Caco-2 (cell line): ENCODE measurements at regions of chr7 and their contacts with region 1.

Region 1: GRCh38 chr7:92833024-92833765 is 3.2 kb downstream of the CDK6 start:
- DNase-seq: peak; percentile 91 to 94
- H3K4me3 ChIP-seq: peak overlapping the region; percentile 79
- H3K4me3 Mint-ChIP-seq: peak overlapping the region; percentile 86
- H3K27ac Mint-ChIP-seq: peak overlapping the region; percentile 77
- H3K4me1 ChIP-seq: peaks cover 24% of the 10 kb centered on the region
- H3K4me1 Mint-ChIP-seq: peaks cover 18% of the 10 kb centered on the region
- H3K27me3 ChIP-seq: no peaks in the 10 kb centered on the region
- H3K27me3 Mint-ChIP-seq: no peaks in the 10 kb centered on the region
- CTCF ChIP-seq: peak; percentile 91 to 93

Region 2: GRCh38 chr7:92557249-92557648 is 275.9 kb before region 1 on chr7:
- CTCF ChIA-PET with region 1: no interaction called
- POLR2A ChIA-PET with region 1: no interaction called
- intact Hi-C with region 1: no loop called
- DNase-seq: no peak
- H3K4me3 ChIP-seq: no peak overlapping the region
- H3K4me3 Mint-ChIP-seq: no peak overlapping the region
- H3K27ac Mint-ChIP-seq: no peak overlapping the region
- H3K4me1 ChIP-seq: peaks cover 9% of the 10 kb centered on the region
- H3K4me1 Mint-ChIP-seq: no peaks in the 10 kb centered on the region
- H3K27me3 ChIP-seq: no peaks in the 10 kb centered on the region
- H3K27me3 Mint-ChIP-seq: no peaks in the 10 kb centered on the region
- CTCF ChIP-seq: no peak

Region 3: DNA sequence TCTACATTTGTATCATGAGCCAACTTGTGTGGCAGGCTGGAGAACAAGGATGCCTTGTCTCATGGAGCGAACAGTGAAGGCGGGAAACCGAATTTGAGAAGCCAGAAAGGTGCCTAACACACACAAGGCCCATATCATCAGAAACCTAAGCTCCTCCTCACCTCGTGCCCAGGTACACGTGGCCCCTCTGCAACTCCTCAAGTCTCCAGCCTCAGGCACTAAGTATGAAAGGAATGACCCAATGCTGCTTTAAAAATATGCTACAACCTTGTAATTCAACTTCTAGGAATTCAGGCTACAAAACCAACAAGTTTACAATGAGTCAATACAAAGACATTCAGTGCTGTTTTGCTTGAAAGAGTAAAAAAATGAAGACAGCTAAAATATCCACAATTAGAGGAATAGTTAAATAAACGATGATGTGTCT is 92.5 kb before region 1 on chr7:
- CTCF ChIA-PET with region 1: interaction called, 3 read pairs
- POLR2A ChIA-PET with region 1: interaction called, 15 read pairs
- intact Hi-C with region 1: no loop called
- DNase-seq: peak; percentile 73
- H3K4me3 ChIP-seq: no peak overlapping the region
- H3K4me3 Mint-ChIP-seq: peak overlapping the region; percentile 55
- H3K27ac Mint-ChIP-seq: peak overlapping the region; percentile 48
- H3K4me1 ChIP-seq: peaks cover 51% of the 10 kb centered on the region
- H3K4me1 Mint-ChIP-seq: peaks cover 59% of the 10 kb centered on the region
- H3K27me3 ChIP-seq: no peaks in the 10 kb centered on the region
- H3K27me3 Mint-ChIP-seq: no peaks in the 10 kb centered on the region
- CTCF ChIP-seq: no peak

Region 4: GRCh38 chr7:92854501-92855238 is 21.5 kb after region 1 on chr7:
- CTCF ChIA-PET with region 1: interaction called, 11 read pairs
- POLR2A ChIA-PET with region 1: no interaction called
- intact Hi-C with region 1: no loop called
- DNase-seq: no peak
- H3K4me3 ChIP-seq: no peak overlapping the region
- H3K4me3 Mint-ChIP-seq: no peak overlapping the region
- H3K27ac Mint-ChIP-seq: peak overlapping the region; percentile 9
- H3K4me1 ChIP-seq: peaks cover 15% of the 10 kb centered on the region; the same call in 1 of the 2 replicates
- H3K4me1 Mint-ChIP-seq: peaks cover 7% of the 10 kb centered on the region
- H3K27me3 ChIP-seq: no peaks in the 10 kb centered on the region
- H3K27me3 Mint-ChIP-seq: no peaks in the 10 kb centered on the region
- CTCF ChIP-seq: no peak

Region 5: DNA sequence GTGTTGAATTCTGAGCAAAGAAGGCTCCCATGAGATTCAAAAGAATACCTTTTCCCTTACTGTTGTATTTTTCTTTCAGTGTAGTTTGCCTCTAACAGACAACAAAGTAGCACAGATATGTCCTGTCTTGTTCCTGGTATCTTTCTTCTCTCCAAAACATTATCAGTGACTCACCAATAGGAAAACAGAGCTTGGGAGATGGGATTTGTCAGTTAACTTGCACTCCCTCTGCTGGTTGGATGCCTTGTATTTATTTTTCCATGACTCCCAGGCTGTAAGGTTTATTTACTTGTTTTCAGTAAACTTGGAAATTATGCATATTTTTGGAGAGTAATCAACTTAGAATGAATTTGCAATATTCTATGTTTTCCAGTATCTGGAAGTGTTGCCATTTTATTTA is 154.9 kb after region 1 on chr7:
- CTCF ChIA-PET with region 1: no interaction called
- POLR2A ChIA-PET with region 1: no interaction called
- intact Hi-C with region 1: loop called (anchors 1 kb)
- DNase-seq: peak in 1 of 2 experiments; percentile 55
- H3K4me3 ChIP-seq: no peak overlapping the region
- H3K4me3 Mint-ChIP-seq: no peak overlapping the region
- H3K27ac Mint-ChIP-seq: peak overlapping the region; percentile 32
- H3K4me1 ChIP-seq: 0 out of 2 replicates have a peak, but pooled peaks cover 10% of the 10 kb centered on the region
- H3K4me1 Mint-ChIP-seq: peaks cover 11% of the 10 kb centered on the region
- H3K27me3 ChIP-seq: no peaks in the 10 kb centered on the region
- H3K27me3 Mint-ChIP-seq: peaks cover 3% of the 10 kb centered on the region
- CTCF ChIP-seq: peak; percentile 39 to 53

Region 6: GRCh38 chr7:93231799-93232672 is 398.8 kb after region 1 on chr7 and contains the start of gene VPS50:
- CTCF ChIA-PET with region 1: no interaction called
- POLR2A ChIA-PET with region 1: no interaction called
- intact Hi-C with region 1: loop called (anchors 5 kb)
- DNase-seq: peak; percentile 96 to 97
- H3K4me3 ChIP-seq: peak within 1 kb of the TSS; percentile 51
- H3K4me3 Mint-ChIP-seq: peak within 1 kb of the TSS; percentile 96
- H3K27ac Mint-ChIP-seq: peak within 1 kb of the TSS; percentile 97
- H3K4me1 ChIP-seq: peaks cover 15% of the 10 kb centered on the region; the same call in 1 of the 2 replicates
- H3K4me1 Mint-ChIP-seq: no peaks in the 10 kb centered on the region
- H3K27me3 ChIP-seq: no peaks in the 10 kb centered on the region
- H3K27me3 Mint-ChIP-seq: no peaks in the 10 kb centered on the region
- CTCF ChIP-seq: peak in 1 of 2 experiments; percentile 32
- total RNA-seq, gene VPS50: 38.7 and 40.3 TPM in 2 replicates